ENCODE measurements at regions of chr11 and their contacts with region 1.

Region 1: DNA sequence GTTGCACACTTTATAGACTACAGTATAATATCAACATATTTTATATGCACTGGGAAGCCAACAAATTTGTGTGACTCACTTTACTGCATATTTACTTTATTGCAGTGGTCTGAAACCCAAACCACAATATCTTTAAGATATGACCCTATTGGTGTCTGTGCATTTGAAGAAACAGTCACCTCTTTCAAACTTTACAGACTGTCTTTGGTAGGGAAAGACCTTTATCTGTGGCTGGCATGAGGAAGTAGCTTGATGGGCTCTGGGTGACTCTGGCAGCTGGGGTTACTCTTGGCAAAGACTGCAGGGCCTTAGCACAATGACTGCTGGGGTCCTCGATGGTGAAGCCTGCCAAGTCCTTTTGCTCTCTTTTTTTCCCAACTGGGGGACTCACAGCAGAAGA is 21.3 kb upstream of the ABTB2 start:
- DNase-seq: no peak
- H3K4me3 ChIP-seq: no peak overlapping the region
- CTCF ChIP-seq: no peak
- POLR2A ChIP-seq: no peak

Region 2: GRCh38 chr11:34454308-34455032 is 75.4 kb after region 1 on chr11:
- intact Hi-C with region 1: loop called (anchors 10 kb)
- DNase-seq: no peak
- H3K4me3 ChIP-seq: no peak overlapping the region
- CTCF ChIP-seq: no peak
- POLR2A ChIP-seq: no peak

Region 3: DNA sequence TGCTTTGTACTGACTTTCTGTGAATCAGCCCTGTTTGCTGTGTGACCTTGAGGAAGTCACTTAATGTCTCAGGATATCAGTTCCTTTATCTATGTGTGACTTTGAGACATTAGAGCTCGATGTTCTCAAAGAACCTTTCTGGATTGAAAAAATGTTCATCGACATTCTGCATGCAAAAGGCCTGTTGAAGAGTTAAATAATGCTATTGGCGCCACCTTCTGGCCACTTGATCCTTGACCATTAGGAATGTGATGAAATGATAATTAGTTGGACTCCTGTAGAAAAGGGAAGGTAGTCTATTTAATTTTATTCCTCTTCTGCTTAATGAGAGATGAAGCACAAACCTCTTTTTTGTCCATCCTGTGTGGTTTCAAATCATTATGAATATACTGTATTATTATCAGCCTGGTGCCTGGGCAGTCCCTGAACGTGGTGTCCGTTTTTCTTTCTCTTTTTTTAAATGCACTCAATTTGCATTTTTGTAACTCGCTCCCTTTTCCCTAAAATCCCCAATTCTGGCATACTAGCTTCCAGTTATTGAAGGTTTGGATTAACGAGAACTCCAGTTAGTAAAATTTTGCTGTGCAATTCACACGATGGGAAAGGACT is 113.8 kb after region 1 on chr11:
- intact Hi-C with region 1: loop called (anchors 10 kb)
- DNase-seq: peak; percentile 58 to 91
- H3K4me3 ChIP-seq: no peak overlapping the region
- CTCF ChIP-seq: no peak
- POLR2A ChIP-seq: no peak